Activated B cell treated with CpG ODN at 0.5 μM for 24 hours (primary cell): ENCODE measurements at regions of chr7 and their contacts with region 1.

Region 1: GRCh38 chr7:114916261-114916892 is 5.5 kb upstream of the MDFIC start:
- DNase-seq: no peak
- ATAC-seq: peak; percentile 92
- H3K4me3 Mint-ChIP-seq: peak overlapping the region; percentile 75
- H3K27ac Mint-ChIP-seq: peak overlapping the region; percentile 91
- H3K4me1 Mint-ChIP-seq: peaks cover 59% of the 10 kb centered on the region
- H3K27me3 Mint-ChIP-seq: no peaks in the 10 kb centered on the region
- CTCF ChIP-seq: no peak

Region 2: DNA sequence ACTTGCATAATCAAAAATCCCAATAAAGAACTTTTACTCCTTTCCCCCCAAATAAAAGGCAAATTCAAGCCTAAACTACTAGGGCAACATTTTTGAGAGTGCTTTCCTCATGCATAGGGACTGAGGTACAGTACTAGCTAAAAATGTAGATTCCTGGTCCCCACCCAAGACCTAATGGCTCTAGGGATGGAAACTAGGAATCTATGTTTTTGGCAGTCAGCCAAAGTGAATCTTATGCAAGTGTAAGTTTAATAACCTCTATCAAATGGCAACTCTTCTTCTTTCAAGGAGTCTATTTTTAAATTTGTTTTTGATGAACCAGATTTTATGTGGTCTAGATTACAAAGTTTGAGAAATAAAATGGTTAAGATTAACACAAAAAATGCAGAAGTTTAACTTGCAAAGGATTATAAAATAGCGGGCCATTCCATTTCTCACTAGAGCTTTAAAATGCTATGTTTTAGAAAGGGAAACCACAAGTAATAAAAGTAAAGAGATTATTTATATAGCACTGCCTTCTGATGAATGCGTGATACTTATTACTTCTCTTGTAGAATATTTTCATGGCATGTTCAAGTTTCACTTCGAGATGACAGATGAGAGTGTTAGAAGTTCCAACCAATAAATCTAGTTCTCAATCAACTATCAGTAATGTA is 64.8 kb before region 1 on chr7:
- CTCF ChIA-PET with region 1: no interaction called
- POLR2A ChIA-PET with region 1: no interaction called
- intact Hi-C with region 1: no loop called
- DNase-seq: no peak
- ATAC-seq: no peak
- H3K4me3 Mint-ChIP-seq: no peak overlapping the region
- H3K27ac Mint-ChIP-seq: no peak overlapping the region
- H3K4me1 Mint-ChIP-seq: no peaks in the 10 kb centered on the region
- H3K27me3 Mint-ChIP-seq: peaks cover 2% of the 10 kb centered on the region
- CTCF ChIP-seq: no peak

Region 3: DNA sequence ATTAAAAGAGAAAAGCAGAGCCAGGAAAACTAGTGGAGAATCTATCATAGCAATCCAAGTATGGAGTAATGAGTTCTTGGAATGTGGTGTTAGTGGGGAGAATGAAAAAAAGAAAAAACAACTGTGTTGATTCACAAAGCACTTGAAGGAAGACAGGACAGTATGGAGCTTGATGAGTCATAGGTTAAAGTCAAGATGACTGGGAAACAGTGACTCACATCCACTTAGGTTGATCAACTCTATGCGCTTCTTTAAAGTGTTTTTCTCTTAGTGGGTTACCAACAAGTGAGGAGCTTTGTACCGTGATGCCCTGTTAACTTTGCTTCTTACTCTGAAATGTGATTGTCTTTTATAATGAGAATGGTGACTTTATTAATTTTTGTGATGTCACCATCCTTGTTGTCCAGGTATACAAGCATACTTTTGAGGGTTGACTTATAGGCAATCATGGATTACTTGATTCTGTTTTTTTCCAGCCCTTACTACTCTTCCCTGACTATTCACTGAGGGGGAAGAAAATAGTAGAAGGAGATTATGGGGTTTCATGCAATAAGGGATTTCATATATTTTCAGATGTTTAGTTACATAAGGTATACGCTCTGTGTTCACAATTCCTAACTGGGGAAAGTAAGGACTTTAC is 26.6 kb before region 1 on chr7:
- CTCF ChIA-PET with region 1: no interaction called
- POLR2A ChIA-PET with region 1: interaction called, 6 read pairs
- intact Hi-C with region 1: loop called (anchors 1 kb)
- DNase-seq: no peak
- ATAC-seq: peak; percentile 97
- H3K4me3 Mint-ChIP-seq: no peak overlapping the region
- H3K27ac Mint-ChIP-seq: peak overlapping the region; percentile 2
- H3K4me1 Mint-ChIP-seq: peaks cover 8% of the 10 kb centered on the region
- H3K27me3 Mint-ChIP-seq: no peaks in the 10 kb centered on the region
- CTCF ChIP-seq: no peak

Region 4: DNA sequence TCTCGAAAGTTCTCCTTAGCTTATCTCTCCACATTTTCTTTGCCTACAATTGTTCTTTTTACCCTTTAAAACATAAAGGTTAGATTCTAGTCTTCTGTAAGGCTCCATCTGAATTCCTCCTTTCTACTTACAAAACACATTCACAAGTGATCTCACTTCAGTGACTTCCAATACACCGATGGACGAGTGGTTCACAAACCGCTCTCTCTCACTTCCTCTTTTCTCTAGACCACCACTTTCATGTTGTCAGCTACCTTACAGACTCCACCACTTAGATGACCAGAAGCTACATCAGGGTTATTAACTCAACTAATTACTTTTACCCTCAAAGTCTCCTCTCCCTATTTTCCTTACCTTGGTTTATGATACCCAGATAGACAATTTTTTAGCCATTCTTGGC is 1767.4 kb after region 1 on chr7:
- CTCF ChIA-PET with region 1: no interaction called
- POLR2A ChIA-PET with region 1: interaction called, 13 read pairs
- intact Hi-C with region 1: no loop called
- DNase-seq: no peak
- ATAC-seq: peak; percentile 96
- H3K4me3 Mint-ChIP-seq: no peak overlapping the region
- H3K27ac Mint-ChIP-seq: no peak overlapping the region
- H3K4me1 Mint-ChIP-seq: peaks cover 20% of the 10 kb centered on the region
- H3K27me3 Mint-ChIP-seq: peaks cover 68% of the 10 kb centered on the region
- CTCF ChIP-seq: no peak